ENCODE measurements at regions of chr1 and their contacts with region 1.

Region 1: GRCh38 chr1:34852677-34853217 is 6.8 kb downstream of the SMIM12 start:
- DNase-seq: peak; percentile 95
- ATAC-seq: peak; percentile 100
- H3K4me3 Mint-ChIP-seq: no peak overlapping the region
- H3K27ac Mint-ChIP-seq: peak overlapping the region; percentile 34
- H3K4me1 Mint-ChIP-seq: peaks cover 17% of the 10 kb centered on the region
- H3K27me3 Mint-ChIP-seq: no peaks in the 10 kb centered on the region

Region 2: GRCh38 chr1:34529935-34530859 is 322.6 kb before region 1 on chr1:
- CTCF ChIA-PET with region 1: no interaction called
- POLR2A ChIA-PET with region 1: no interaction called
- intact Hi-C with region 1: no loop called
- DNase-seq: no peak
- ATAC-seq: no peak
- H3K4me3 Mint-ChIP-seq: no peak overlapping the region
- H3K27ac Mint-ChIP-seq: no peak overlapping the region
- H3K4me1 Mint-ChIP-seq: no peaks in the 10 kb centered on the region
- H3K27me3 Mint-ChIP-seq: peaks cover 19% of the 10 kb centered on the region

Region 3: DNA sequence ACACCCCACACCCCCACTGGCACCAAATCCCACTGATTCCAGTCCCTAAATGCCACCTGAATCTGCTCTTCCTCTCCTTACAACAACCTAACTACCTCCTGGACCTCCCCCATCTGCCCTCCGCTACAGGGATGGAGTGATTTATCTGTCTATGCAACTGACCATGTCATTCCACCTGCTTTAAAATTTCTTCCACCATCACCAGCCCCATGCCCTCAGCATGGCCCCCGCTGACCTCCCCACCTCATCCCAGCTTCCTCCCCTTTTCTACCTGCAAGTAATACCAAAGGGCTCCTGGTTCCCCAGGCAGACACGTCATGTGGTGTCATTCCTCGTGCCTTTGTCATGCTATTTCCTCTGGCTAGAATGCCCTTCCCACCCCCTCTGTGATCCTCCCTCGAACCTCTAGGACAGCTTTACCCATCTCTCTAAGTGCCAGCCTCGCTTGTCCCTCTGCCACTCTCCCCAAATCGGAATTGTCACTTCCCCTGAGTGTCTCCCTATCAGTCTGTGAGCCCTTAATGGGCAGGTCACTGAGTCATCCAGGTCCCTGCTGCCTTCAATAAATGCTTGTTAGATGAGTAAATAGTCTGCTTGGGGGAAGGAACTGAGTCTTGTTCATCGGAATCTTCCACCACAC is 89.5 kb before region 1 on chr1:
- CTCF ChIA-PET with region 1: no interaction called
- POLR2A ChIA-PET with region 1: no interaction called
- intact Hi-C with region 1: no loop called
- DNase-seq: no peak
- ATAC-seq: no peak
- H3K4me3 Mint-ChIP-seq: no peak overlapping the region
- H3K27ac Mint-ChIP-seq: no peak overlapping the region
- H3K4me1 Mint-ChIP-seq: no peaks in the 10 kb centered on the region
- H3K27me3 Mint-ChIP-seq: no peaks in the 10 kb centered on the region

Region 4: DNA sequence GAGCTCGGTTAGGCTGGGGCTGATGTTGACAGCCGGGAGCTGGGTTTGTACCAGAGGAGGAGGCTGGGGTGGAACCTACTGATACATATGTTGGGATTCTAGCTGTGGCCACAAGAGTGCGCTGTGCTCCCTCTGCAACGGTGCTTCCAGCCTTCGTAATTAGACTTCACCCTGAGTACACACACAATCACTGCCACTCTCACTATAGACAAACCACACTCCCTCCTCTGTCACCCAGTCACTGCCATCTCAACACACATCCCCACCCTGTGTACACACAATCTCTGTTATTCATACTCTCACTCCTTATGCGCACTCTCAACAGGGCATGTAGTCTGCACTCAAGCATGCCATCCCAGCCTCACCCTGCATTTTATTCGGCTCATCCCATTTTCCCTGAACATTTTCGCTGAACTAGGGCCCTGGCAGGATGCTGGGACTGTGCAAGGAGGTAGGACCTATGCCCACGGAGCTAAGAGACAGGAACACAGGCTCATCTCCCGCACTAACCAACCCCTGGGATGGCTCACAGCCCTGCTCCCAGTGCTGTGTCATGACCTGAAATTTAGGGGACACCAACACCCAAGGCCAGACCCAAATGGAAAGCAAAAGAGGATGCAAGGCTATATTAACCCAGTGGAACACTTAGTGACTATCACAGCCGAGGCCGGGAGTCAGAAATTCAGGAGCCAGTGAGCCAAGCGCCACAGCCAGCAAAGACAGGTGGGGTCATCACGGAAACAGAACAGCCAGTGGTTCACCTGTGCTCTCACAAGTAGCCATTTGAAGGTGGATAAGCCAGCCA is 66.0 kb before region 1 on chr1:
- CTCF ChIA-PET with region 1: interaction called, 10 read pairs
- POLR2A ChIA-PET with region 1: interaction called, 3 read pairs
- intact Hi-C with region 1: loop called (anchors 1 kb)
- DNase-seq: peak; percentile 85
- ATAC-seq: peak; percentile 87
- H3K4me3 Mint-ChIP-seq: no peak overlapping the region
- H3K27ac Mint-ChIP-seq: no peak overlapping the region
- H3K4me1 Mint-ChIP-seq: peaks cover 11% of the 10 kb centered on the region
- H3K27me3 Mint-ChIP-seq: peaks cover 30% of the 10 kb centered on the region

Region 5: DNA sequence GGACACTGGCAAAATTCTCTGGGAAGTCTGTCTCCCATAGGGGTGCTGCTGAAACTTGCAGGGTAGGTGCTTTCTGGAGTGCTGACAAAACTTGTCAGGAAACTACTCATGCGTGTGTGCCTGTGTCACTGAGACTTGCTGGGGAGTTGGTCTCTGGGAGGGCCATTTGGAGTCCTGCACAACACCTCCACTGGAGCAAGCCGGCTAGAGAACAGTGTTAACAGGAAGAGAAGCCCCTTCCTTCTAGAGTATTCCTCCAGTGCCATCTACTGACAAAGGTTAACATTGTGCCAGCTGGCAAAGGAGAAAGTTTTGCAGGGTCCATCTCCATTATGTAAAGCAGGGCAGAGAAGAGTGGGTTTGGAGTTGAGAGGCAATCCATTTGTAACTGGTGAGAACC is 445.7 kb after region 1 on chr1:
- CTCF ChIA-PET with region 1: no interaction called
- POLR2A ChIA-PET with region 1: no interaction called
- intact Hi-C with region 1: loop called in 1 of 2 experiments (anchors 2 kb)
- DNase-seq: peak; percentile 25
- ATAC-seq: peak; percentile 81
- H3K4me3 Mint-ChIP-seq: no peak overlapping the region
- H3K27ac Mint-ChIP-seq: no peak overlapping the region
- H3K4me1 Mint-ChIP-seq: peaks cover 9% of the 10 kb centered on the region
- H3K27me3 Mint-ChIP-seq: no peaks in the 10 kb centered on the region